ENCODE measurements at regions of chr6 and their contacts with region 1.

Region 1: GRCh38 chr6:7910654-7911344 is at the start of gene TXNDC5:
- DNase-seq: peak; percentile 52 to 57
- ATAC-seq: peak; percentile 75 to 76
- H3K4me3 ChIP-seq: peak within 1 kb of the TSS; percentile 65 to 92 (median 74)
- H3K27ac ChIP-seq: peak within 1 kb of the TSS; percentile 78 to 86 (median 80)
- H3K4me1 ChIP-seq: peaks cover 17 to 25% of the 10 kb centered on the region in 2 donors
- H3K27me3 ChIP-seq: no peaks in the 10 kb centered on the region
- CTCF ChIP-seq: no peak
- POLR2A ChIP-seq: peak; percentile 37 to 56
- total RNA-seq, gene TXNDC5: 29.9 to 43.3 (median 38.8) TPM

Region 2: GRCh38 chr6:7992002-7992815 is 81.4 kb after region 1 on chr6:
- in situ Hi-C with region 1: no loop called
- intact Hi-C with region 1: loop called (anchors 5 kb)
- DNase-seq: no peak
- ATAC-seq: peak; percentile 24 to 47
- H3K4me3 ChIP-seq: no peak overlapping the region
- H3K27ac ChIP-seq: no peak overlapping the region
- H3K4me1 ChIP-seq: peaks cover 0 to 4% of the 10 kb centered on the region in 2 donors
- H3K27me3 ChIP-seq: no peaks in the 10 kb centered on the region
- CTCF ChIP-seq: peak in 2 of 5 experiments; percentile 27 to 43
- POLR2A ChIP-seq: no peak